PC-9 (cell line): ENCODE measurements at regions of chr1 and their contacts with region 1.

Region 1: GRCh38 chr1:6393400-6394187 is at the start of gene ACOT7:
- DNase-seq: peak; percentile 69 to 86
- H3K4me3 ChIP-seq: peak within 1 kb of the TSS; percentile 60
- H3K27ac ChIP-seq: peak within 1 kb of the TSS; percentile 69
- H3K4me1 ChIP-seq: peaks cover 4% of the 10 kb centered on the region; the same call in 1 of the 2 replicates
- H3K27me3 ChIP-seq: no peaks in the 10 kb centered on the region
- CTCF ChIP-seq: no peak
- total RNA-seq, gene ACOT7: 62.2 and 70.2 TPM in 2 replicates

Region 2: GRCh38 chr1:6378096-6378746 is 15.4 kb before region 1 on chr1:
- CTCF ChIA-PET with region 1: no interaction called
- POLR2A ChIA-PET with region 1: no interaction called
- intact Hi-C with region 1: no loop called
- DNase-seq: no peak
- H3K4me3 ChIP-seq: no peak overlapping the region
- H3K27ac ChIP-seq: no peak overlapping the region
- H3K4me1 ChIP-seq: no peaks in the 10 kb centered on the region
- H3K27me3 ChIP-seq: no peaks in the 10 kb centered on the region
- CTCF ChIP-seq: no peak

Region 3: GRCh38 chr1:6513320-6513801 is 119.8 kb after region 1 on chr1:
- CTCF ChIA-PET with region 1: no interaction called
- POLR2A ChIA-PET with region 1: interaction called, 17 read pairs
- intact Hi-C with region 1: no loop called
- DNase-seq: peak; percentile 54 to 75
- H3K4me3 ChIP-seq: no peak overlapping the region
- H3K27ac ChIP-seq: no peak overlapping the region
- H3K4me1 ChIP-seq: peaks cover 5% of the 10 kb centered on the region; the same call in 1 of the 2 replicates
- H3K27me3 ChIP-seq: no peaks in the 10 kb centered on the region
- CTCF ChIP-seq: no peak

Region 4: GRCh38 chr1:6904466-6905170 is 511.0 kb after region 1 on chr1:
- CTCF ChIA-PET with region 1: no interaction called
- POLR2A ChIA-PET with region 1: interaction called, 14 read pairs
- intact Hi-C with region 1: no loop called
- DNase-seq: no peak
- H3K4me3 ChIP-seq: no peak overlapping the region
- H3K27ac ChIP-seq: no peak overlapping the region
- H3K4me1 ChIP-seq: no peaks in the 10 kb centered on the region
- H3K27me3 ChIP-seq: no peaks in the 10 kb centered on the region
- CTCF ChIP-seq: no peak